Naive thymus-derived CD4-positive, alpha-beta T cell (primary cell): ENCODE measurements at regions of chr2 and their contacts with region 1.

Region 1: GRCh38 chr2:69774984-69775982 is 33.3 kb downstream of the ANXA4 start:
- DNase-seq: peak in 8 of 9 donors; percentile 34 to 73 (median 51)
- ATAC-seq: peak; percentile 84
- H3K4me3 ChIP-seq: peak overlapping the region; percentile 3
- H3K4me3 Mint-ChIP-seq: peak overlapping the region; percentile 17 to 82 (median 61)
- H3K27ac ChIP-seq: peak overlapping the region; percentile 8
- H3K27ac Mint-ChIP-seq: peak overlapping the region; percentile 29 to 90 (median 61)
- H3K4me1 ChIP-seq: peaks cover 14 to 16% of the 10 kb centered on the region in 2 donors
- H3K4me1 Mint-ChIP-seq: peaks cover 13 to 55% (median 24%) of the 10 kb centered on the region in 7 donors
- H3K27me3 ChIP-seq: no peaks in the 10 kb centered on the region
- H3K27me3 Mint-ChIP-seq: no peaks in the 10 kb centered on the region

Region 2: DNA sequence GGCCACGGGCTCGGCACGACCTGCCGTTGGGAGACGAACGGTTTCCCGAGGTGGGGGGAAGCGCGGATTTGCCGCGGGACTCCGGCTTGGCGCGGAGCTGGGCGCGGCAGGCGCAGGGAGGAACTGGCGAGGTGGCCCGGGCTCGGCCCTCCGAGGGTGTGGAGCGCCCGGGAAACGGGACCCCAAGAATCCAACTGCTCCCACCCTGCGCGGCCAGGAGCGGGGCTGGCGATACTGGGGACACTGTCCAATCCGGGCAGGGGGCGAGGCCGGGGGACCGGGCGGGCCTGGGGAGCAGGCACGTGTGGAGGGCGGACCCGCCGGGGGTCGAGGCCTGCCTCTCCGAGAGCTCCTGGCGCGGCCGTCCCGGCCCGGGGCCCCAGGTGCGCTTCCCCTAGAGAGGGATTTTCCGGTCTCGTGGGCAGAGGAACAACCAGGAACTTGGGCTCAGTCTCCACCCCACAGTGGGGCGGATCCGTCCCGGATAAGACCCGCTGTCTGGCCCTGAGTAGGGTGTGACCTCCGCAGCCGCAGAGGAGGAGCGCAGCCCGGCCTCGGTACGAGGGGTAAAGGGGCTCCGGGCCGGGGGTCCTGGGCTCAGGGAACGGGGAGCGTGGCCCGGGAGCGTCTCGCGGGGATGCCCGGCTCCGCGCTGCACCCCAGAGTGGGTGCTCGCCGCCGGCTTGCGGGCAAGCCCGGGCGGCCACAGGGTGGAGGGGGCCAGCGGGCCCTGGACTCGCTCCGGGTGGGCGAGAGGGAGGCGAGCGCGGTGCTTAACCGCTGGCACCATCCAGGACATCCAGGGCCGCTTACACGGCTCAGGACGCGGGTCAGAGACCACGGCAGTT is 33.4 kb before region 1 on chr2 and contains the start of gene ANXA4:
- CTCF ChIA-PET with region 1: no interaction called
- POLR2A ChIA-PET with region 1: no interaction called
- intact Hi-C with region 1: loop called (anchors 2 kb)
- DNase-seq: peak; percentile 23 to 75 (median 33)
- ATAC-seq: peak; percentile 83
- H3K4me3 ChIP-seq: peak within 1 kb of the TSS; percentile 63
- H3K4me3 Mint-ChIP-seq: peak within 1 kb of the TSS; percentile 76 to 98 (median 94)
- H3K27ac ChIP-seq: peak within 1 kb of the TSS; percentile 67
- H3K27ac Mint-ChIP-seq: peak within 1 kb of the TSS in 8 of 9 donors; percentile 72 to 93 (median 86)
- H3K4me1 ChIP-seq: peaks cover 0 to 2% of the 10 kb centered on the region in 2 donors
- H3K4me1 Mint-ChIP-seq: peaks cover 6 to 36% (median 14%) of the 10 kb centered on the region in 7 donors
- H3K27me3 ChIP-seq: no peaks in the 10 kb centered on the region
- H3K27me3 Mint-ChIP-seq: peaks cover 0 to 21% (median 0%) of the 10 kb centered on the region in 5 donors
- total RNA-seq, gene ANXA4: 8.0 to 75.6 (median 15.9) TPM

Region 3: GRCh38 chr2:69755862-69756467 is 19.3 kb before region 1 on chr2:
- CTCF ChIA-PET with region 1: interaction called, 6 read pairs
- POLR2A ChIA-PET with region 1: no interaction called
- intact Hi-C with region 1: loop called in 1 of 2 experiments (anchors 2 kb)
- DNase-seq: peak in 1 of 9 donors; percentile 31
- ATAC-seq: peak; percentile 51
- H3K4me3 ChIP-seq: no peak overlapping the region
- H3K4me3 Mint-ChIP-seq: peak overlapping the region in 1 of 10 donors; percentile 53
- H3K27ac ChIP-seq: no peak overlapping the region
- H3K27ac Mint-ChIP-seq: peak overlapping the region in 2 of 9 donors; percentile 36 to 71
- H3K4me1 ChIP-seq: no peaks in the 10 kb centered on the region
- H3K4me1 Mint-ChIP-seq: peaks cover 0 to 34% (median 0%) of the 10 kb centered on the region in 7 donors
- H3K27me3 ChIP-seq: no peaks in the 10 kb centered on the region
- H3K27me3 Mint-ChIP-seq: no peaks in the 10 kb centered on the region